A673 (cell line): ENCODE measurements at regions of chr6 and their contacts with region 1.

Region 1: DNA sequence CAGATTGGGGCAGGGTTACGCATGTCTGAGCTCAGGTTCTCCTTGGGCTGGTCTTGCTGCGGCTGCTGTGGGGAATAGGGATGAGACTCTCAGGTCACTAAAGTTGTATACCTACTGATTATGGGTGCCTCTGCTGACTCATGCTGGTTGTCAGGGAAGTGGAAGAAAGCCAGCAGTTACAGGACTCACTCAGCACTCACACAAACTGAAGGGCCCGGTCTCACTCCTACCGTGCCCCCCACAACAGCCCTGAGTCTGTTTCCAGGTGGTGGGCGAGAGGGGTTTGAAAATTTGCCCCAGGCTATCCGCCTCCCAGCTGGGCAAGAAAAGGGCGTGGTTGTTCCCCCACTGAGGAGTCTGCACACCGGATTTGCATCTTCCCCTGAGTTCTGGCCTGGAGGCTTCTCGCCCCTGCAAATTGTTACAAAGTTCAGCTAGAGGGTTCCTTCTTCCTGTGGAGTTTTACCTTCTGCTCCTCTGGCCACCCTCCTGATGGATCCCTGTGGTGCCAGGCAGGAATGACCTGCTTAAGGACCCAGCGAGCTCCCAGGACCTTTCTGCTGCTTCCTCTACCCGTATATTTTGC is 659.2 kb downstream of the HDGFL1 start:
- DNase-seq: no peak
- H3K4me3 ChIP-seq: no peak overlapping the region
- H3K27ac ChIP-seq: no peak overlapping the region
- H3K4me1 ChIP-seq: no peaks in the 10 kb centered on the region
- H3K27me3 ChIP-seq: no peaks in the 10 kb centered on the region
- CTCF ChIP-seq: no peak

Region 2: DNA sequence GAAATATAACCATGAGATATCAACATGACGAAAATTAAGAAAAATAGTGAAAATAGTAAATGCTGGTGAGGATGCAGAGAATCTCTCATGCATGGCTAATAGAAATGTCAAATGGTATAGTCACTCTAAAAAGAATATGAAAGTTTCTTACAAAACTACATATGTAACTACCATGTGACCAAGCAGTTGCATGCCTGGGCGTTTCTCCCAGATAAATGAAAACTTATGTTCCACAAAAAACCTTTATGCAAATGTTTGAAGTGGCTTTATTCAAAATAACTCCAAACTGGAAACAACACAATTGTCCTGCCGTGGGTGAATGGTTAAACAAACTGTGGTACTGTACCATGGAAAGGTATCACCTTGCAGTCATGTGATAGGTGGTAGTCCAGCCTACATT is 546.8 kb before region 1 on chr6:
- CTCF ChIA-PET with region 1: no interaction called
- POLR2A ChIA-PET with region 1: no interaction called
- intact Hi-C with region 1: no loop called
- DNase-seq: no peak
- H3K4me3 ChIP-seq: no peak overlapping the region
- H3K27ac ChIP-seq: no peak overlapping the region
- H3K4me1 ChIP-seq: no peaks in the 10 kb centered on the region
- H3K27me3 ChIP-seq: no peaks in the 10 kb centered on the region
- CTCF ChIP-seq: no peak

Region 3: DNA sequence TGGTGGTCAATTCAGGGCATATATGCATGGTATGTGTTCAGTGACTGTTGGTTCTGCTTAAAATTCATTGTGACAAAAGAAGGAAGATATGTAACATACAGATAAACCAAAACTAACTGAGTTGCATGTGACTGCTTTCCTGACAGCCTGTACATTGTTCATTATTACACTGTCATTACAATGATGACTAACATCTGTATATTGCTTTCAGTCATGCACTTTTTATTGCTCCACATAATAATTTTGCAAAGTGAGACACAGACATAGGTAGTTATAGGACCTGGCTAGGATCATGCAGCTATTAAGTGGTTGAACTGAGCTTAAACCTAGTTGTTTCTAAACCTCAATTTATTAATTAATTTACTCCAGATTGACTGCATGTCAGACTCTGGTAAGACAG is 44.0 kb after region 1 on chr6:
- CTCF ChIA-PET with region 1: no interaction called
- POLR2A ChIA-PET with region 1: no interaction called
- intact Hi-C with region 1: loop called (anchors 1 kb)
- DNase-seq: no peak
- H3K4me3 ChIP-seq: no peak overlapping the region
- H3K27ac ChIP-seq: no peak overlapping the region
- H3K4me1 ChIP-seq: no peaks in the 10 kb centered on the region
- H3K27me3 ChIP-seq: no peaks in the 10 kb centered on the region
- CTCF ChIP-seq: no peak

Region 4: GRCh38 chr6:23301556-23301955 is 73.0 kb after region 1 on chr6:
- CTCF ChIA-PET with region 1: no interaction called
- POLR2A ChIA-PET with region 1: no interaction called
- intact Hi-C with region 1: no loop called
- DNase-seq: peak; percentile 59
- H3K4me3 ChIP-seq: no peak overlapping the region
- H3K27ac ChIP-seq: peak overlapping the region; percentile 78
- H3K4me1 ChIP-seq: peaks cover 41% of the 10 kb centered on the region
- H3K27me3 ChIP-seq: no peaks in the 10 kb centered on the region
- CTCF ChIP-seq: no peak